ENCODE measurements at regions of chr20 and their contacts with region 1.

Region 1: DNA sequence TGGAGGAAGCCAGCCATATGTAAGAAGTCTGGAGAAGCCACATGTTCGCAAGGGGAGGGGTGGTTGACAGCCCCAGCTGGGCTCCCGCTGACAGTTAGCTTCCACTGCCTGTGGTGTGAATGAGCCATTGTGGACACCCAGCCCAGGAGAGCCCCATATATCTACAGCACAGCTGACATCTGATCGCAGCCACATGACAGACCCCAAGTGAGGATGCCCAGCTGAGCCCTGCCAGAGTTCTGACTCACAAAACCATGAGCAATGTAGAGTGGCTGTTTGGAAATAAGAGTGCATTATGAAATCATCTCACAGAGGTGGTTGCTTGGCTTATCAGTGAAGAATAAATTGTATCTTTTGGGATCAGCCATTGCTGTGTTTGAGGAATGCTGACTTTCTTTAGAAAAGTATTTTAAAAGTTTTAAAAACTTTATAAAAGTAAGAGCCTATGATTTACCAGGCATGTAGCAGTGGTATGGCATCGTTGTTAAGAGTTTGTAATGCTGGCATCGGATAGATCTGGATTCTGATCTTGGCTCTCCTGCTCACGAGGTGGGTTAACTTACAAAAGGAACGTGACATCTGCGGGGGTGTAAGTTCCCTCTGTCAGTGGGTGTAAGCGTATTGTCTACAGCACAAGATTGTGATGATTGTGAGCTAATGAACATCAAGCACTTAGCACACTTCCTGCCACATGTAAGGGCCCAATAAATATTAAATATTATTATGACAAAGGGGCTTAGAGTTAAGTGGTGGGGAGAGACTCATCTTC is 24.1 kb downstream of the CFAP61 start:
- DNase-seq: peak; percentile 95 to 98
- ATAC-seq: peak; percentile 74 to 79
- H3K4me3 ChIP-seq: peak overlapping the region; percentile 48 to 67 (median 60)
- H3K27ac ChIP-seq: peak overlapping the region; percentile 87 to 98 (median 90)
- H3K4me1 ChIP-seq: peaks cover 35 to 54% of the 10 kb centered on the region in 2 donors
- H3K27me3 ChIP-seq: no peaks in the 10 kb centered on the region
- CTCF ChIP-seq: no peak
- POLR2A ChIP-seq: peak; percentile 87 to 96

Region 2: DNA sequence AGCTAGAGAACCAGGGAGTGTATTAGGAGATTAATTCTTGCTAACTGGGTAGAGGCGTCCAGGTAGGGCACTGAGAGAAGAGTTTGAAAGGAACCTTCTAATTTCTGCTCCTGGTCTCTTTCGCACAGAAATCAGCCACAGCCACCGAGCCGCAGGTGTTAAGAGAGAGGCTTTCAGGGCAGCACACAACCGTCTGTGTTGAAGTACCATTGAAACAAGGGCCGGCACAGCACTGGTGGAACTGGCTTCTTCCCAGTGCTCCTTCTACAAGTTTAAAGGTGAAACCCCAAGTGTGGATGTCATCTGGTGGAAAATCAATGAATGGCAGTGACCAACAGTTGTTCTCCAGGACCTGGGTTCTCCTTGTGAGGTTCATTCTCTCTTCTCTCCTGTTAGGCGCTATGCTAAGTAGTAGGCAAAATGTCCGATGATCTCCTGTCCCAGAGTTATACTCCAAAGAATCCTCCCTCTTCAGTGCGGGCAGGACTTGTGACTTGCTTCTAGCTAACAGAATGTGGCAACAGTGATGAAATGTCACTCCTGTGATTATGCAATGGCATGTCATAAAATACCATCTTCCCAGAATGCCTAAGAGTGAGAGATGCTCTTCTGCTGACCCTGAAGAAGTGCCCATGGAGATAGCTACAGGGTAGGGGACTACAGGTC is 333.4 kb before region 1 on chr20:
- in situ Hi-C with region 1: no loop called
- intact Hi-C with region 1: no loop called
- DNase-seq: peak; percentile 56 to 62
- ATAC-seq: peak; percentile 96 to 98
- H3K4me3 ChIP-seq: no peak overlapping the region
- H3K27ac ChIP-seq: peak overlapping the region; percentile 15 to 68 (median 48)
- H3K4me1 ChIP-seq: peaks cover 4 to 16% of the 10 kb centered on the region in 2 donors
- H3K27me3 ChIP-seq: no peaks in the 10 kb centered on the region
- CTCF ChIP-seq: no peak
- POLR2A ChIP-seq: no peak

Region 3: DNA sequence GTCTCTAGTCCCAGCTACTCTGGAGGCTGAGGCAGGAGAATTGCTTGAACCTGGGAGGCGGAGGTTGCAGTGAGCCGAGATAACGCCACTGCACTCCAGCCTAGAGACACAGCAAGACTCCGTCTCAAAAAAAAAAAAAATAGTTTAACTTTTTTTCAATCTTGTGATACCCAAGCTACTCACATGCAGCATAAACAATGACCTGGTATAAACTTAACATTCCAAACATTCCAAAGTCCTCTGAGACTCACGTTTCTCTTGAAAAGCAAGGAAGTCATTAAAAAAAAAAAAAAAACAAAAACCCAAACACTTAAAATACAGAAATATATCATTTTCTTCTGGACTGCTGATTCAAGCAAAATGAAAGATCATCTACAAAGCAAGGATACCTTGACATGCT is 38.5 kb before region 1 on chr20:
- in situ Hi-C with region 1: no loop called
- intact Hi-C with region 1: no loop called
- DNase-seq: no peak
- ATAC-seq: no peak
- H3K4me3 ChIP-seq: no peak overlapping the region
- H3K27ac ChIP-seq: no peak overlapping the region
- H3K4me1 ChIP-seq: no peaks in the 10 kb centered on the region
- H3K27me3 ChIP-seq: no peaks in the 10 kb centered on the region
- CTCF ChIP-seq: no peak
- POLR2A ChIP-seq: no peak

Region 4: DNA sequence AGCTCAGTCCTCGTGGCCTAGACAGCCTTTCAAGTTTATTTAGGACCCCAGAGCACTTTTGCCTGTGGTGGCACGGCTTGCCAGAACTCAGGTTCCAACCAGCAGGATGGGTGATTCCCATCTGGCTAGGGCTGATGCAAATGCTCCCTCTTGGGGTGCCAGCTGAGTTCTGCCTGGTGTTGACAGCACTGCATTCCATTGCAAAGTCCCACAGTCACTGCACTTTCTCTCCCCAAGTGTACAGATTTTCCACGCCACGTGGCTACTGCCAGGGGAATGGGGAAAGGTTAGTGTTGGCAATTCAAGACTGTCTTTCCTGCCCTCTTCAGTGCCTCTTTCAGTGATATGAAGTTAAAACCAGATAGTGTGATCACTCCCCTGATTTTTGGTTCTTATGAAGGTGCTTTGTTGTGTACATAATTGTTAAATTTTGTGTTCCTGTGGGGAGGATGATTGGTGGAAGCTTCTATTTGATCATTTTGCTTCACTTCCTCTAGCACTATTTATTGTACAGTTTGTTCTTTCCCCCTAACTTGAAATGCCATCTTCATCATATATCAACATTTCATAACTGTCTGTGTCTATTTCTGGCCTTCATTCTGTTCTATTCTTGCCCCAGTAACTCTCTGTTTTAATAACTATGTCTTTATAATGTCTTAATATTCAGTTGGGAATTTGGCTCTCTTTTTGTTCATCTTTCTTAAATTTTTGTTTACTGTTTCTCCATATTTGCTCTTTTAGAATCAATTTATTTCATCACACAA is 62.0 kb after region 1 on chr20:
- in situ Hi-C with region 1: no loop called
- intact Hi-C with region 1: loop called (anchors 2 kb)
- DNase-seq: peak; percentile 38 to 80
- ATAC-seq: peak; percentile 83 to 88
- H3K4me3 ChIP-seq: peak overlapping the region in 3 of 4 donors; percentile 14 to 19 (median 15)
- H3K27ac ChIP-seq: peak overlapping the region; percentile 92 to 97 (median 96)
- H3K4me1 ChIP-seq: peaks cover 32 to 43% of the 10 kb centered on the region in 2 donors
- H3K27me3 ChIP-seq: no peaks in the 10 kb centered on the region
- CTCF ChIP-seq: peak in 1 of 5 experiments; percentile 12
- POLR2A ChIP-seq: peak in 1 of 2 donors; percentile 4

Region 5: GRCh38 chr20:20237093-20237959 is 160.8 kb after region 1 on chr20:
- in situ Hi-C with region 1: loop called in 3 of 4 experiments (anchors 5 to 25 kb)
- intact Hi-C with region 1: no loop called
- DNase-seq: peak in 1 of 2 donors; percentile 49
- ATAC-seq: peak; percentile 51 to 73
- H3K4me3 ChIP-seq: no peak overlapping the region
- H3K27ac ChIP-seq: peak overlapping the region in 2 of 4 donors; percentile 8 to 31
- H3K4me1 ChIP-seq: peaks cover 10 to 11% of the 10 kb centered on the region in 2 donors
- H3K27me3 ChIP-seq: no peaks in the 10 kb centered on the region
- CTCF ChIP-seq: peak; percentile 75 to 84 (median 79)
- POLR2A ChIP-seq: no peak

Region 6: DNA sequence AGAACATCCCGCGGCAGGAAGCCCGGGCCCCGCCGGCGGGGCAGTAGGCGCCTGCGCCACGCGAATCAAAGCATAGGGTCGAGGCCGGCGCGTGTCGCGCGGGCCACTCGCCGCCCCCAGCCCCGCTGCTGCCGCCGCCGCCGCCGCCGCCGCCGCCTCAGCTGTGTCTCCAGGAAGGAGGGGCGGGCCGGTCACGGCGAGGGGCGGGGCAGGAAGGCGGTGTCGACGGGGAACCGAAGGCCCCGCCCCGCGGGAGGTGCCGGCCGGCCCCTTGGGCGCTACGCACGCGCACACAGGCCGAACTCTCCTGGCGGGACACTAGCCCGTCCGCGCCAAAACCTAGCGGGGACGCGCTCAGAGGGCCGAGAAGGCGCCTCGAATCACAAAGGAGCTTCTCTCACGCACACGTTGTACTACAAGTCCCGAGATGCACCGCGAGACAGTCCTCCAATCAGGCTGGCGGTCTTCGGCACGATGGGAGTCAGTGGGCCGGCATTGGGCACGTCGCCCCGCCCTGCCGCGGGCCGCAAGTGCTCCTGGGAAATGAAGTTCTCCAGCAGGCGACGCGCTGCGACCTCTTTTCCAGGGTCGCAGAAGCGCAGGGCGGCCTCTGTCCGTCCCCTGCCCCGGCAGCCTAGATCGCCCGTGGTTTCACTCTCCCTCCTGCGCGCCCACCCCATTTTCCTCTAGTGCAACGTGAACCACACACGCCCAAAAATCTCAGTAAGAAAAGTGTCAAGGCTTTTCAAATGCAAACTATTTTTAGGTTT is 636.2 kb after region 1 on chr20 and contains the start of gene RALGAPA2:
- in situ Hi-C with region 1: no loop called
- intact Hi-C with region 1: loop called (anchors 10 kb)
- DNase-seq: peak; percentile 97 to 99
- ATAC-seq: peak; percentile 86 to 87
- H3K4me3 ChIP-seq: peak within 1 kb of the TSS; percentile 67 to 87 (median 82)
- H3K27ac ChIP-seq: peak within 1 kb of the TSS; percentile 94 to 98 (median 97)
- H3K4me1 ChIP-seq: peaks cover 38 to 47% of the 10 kb centered on the region in 2 donors
- H3K27me3 ChIP-seq: no peaks in the 10 kb centered on the region
- CTCF ChIP-seq: peak in 1 of 5 experiments; percentile 30
- POLR2A ChIP-seq: peak; percentile 99
- total RNA-seq, gene RALGAPA2: 43.2 to 56.9 (median 52.0) TPM